ENCODE measurements at regions of chr3 and their contacts with region 1.

Region 1: GRCh38 chr3:197791113-197791891 is at the start of gene LRCH3:
- DNase-seq: peak; percentile 77 to 83 (median 82)
- H3K4me3 ChIP-seq: peak within 1 kb of the TSS; percentile 91 to 96
- H3K4me3 Mint-ChIP-seq: peak within 1 kb of the TSS; percentile 94 to 99 (median 98)
- H3K27ac ChIP-seq: peak within 1 kb of the TSS; percentile 94
- H3K27ac Mint-ChIP-seq: peak within 1 kb of the TSS; percentile 95 to 99 (median 98)
- H3K4me1 ChIP-seq: peaks cover 33% of the 10 kb centered on the region
- H3K4me1 Mint-ChIP-seq: peaks cover 27 to 49% (median 37%) of the 10 kb centered on the region in 4 donors
- H3K27me3 ChIP-seq: no peaks in the 10 kb centered on the region
- H3K27me3 Mint-ChIP-seq: no peaks in the 10 kb centered on the region
- total RNA-seq, gene LRCH3: 76.0 to 87.7 TPM

Region 2: GRCh38 chr3:197031315-197032285 is 759.7 kb before region 1 on chr3:
- CTCF ChIA-PET with region 1: no interaction called
- POLR2A ChIA-PET with region 1: no interaction called
- intact Hi-C with region 1: no loop called
- DNase-seq: no peak
- H3K4me3 ChIP-seq: no peak overlapping the region
- H3K4me3 Mint-ChIP-seq: peak overlapping the region in 3 of 8 donors; percentile 7 to 56 (median 28)
- H3K27ac ChIP-seq: no peak overlapping the region
- H3K27ac Mint-ChIP-seq: peak overlapping the region in 2 of 7 donors; percentile 13 to 18
- H3K4me1 ChIP-seq: peaks cover 3% of the 10 kb centered on the region
- H3K4me1 Mint-ChIP-seq: peaks cover 3 to 5% (median 4%) of the 10 kb centered on the region in 4 donors
- H3K27me3 ChIP-seq: no peaks in the 10 kb centered on the region
- H3K27me3 Mint-ChIP-seq: no peaks in the 10 kb centered on the region

Region 3: DNA sequence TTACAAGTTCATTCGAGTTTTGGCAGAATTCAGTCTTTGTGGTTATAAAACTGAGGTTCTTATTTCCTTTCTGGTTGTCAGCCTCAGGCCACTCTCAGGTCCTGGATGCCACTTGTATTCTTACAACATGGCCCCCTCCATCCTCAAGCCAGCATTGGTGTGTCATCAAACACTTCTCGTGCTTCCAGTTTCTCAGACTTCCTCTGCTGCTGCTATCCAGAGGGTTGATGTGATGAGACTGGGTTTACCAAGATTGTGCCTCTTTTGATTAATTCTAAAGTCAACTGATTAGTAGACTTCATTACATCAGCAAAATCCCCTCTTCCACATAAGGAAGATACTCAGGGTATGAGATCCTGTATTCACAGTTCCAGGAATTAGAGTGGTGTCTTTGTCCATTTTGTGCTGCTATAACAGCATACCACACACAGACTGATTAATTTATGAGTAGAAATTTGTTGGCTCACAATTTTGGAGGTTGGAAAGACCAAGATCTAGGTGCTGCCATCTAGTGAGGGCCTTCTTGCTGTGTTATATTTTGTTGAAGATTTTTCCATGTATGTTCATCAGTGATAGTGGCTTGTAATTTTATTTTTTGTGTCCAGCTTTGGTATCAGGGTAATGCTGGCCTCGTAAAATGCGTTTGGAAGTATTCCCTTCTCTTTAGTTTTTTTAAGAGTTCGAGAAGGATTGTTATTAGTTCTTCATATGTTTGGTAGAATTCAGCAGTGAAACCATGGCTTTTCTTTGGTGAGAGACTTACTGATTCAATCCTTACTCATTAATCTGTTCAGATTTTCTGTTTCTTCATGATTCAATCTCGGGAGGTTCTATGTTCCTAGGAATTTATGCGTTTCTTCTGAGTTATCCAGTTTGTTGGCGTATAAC is 10.8 kb after region 1 on chr3:
- CTCF ChIA-PET with region 1: interaction called, 6 read pairs
- POLR2A ChIA-PET with region 1: interaction called, 9 read pairs
- intact Hi-C with region 1: loop called (anchors 1 kb)
- DNase-seq: peak; percentile 20 to 48 (median 36)
- H3K4me3 ChIP-seq: no peak overlapping the region
- H3K4me3 Mint-ChIP-seq: peak overlapping the region in 5 of 8 donors; percentile 3 to 56 (median 24)
- H3K27ac ChIP-seq: no peak overlapping the region
- H3K27ac Mint-ChIP-seq: peak overlapping the region; percentile 74 to 84 (median 77)
- H3K4me1 ChIP-seq: peaks cover 44% of the 10 kb centered on the region
- H3K4me1 Mint-ChIP-seq: peaks cover 34 to 58% (median 43%) of the 10 kb centered on the region in 4 donors
- H3K27me3 ChIP-seq: no peaks in the 10 kb centered on the region
- H3K27me3 Mint-ChIP-seq: no peaks in the 10 kb centered on the region

Region 4: GRCh38 chr3:197835509-197835908 is 44.2 kb after region 1 on chr3:
- CTCF ChIA-PET with region 1: no interaction called
- POLR2A ChIA-PET with region 1: no interaction called
- intact Hi-C with region 1: no loop called
- DNase-seq: no peak
- H3K4me3 ChIP-seq: no peak overlapping the region
- H3K4me3 Mint-ChIP-seq: no peak overlapping the region
- H3K27ac ChIP-seq: no peak overlapping the region
- H3K27ac Mint-ChIP-seq: peak overlapping the region in 5 of 7 donors; percentile 51 to 89 (median 73)
- H3K4me1 ChIP-seq: no peaks in the 10 kb centered on the region
- H3K4me1 Mint-ChIP-seq: peaks cover 0 to 7% (median 6%) of the 10 kb centered on the region in 4 donors
- H3K27me3 ChIP-seq: no peaks in the 10 kb centered on the region
- H3K27me3 Mint-ChIP-seq: no peaks in the 10 kb centered on the region

Region 5: DNA sequence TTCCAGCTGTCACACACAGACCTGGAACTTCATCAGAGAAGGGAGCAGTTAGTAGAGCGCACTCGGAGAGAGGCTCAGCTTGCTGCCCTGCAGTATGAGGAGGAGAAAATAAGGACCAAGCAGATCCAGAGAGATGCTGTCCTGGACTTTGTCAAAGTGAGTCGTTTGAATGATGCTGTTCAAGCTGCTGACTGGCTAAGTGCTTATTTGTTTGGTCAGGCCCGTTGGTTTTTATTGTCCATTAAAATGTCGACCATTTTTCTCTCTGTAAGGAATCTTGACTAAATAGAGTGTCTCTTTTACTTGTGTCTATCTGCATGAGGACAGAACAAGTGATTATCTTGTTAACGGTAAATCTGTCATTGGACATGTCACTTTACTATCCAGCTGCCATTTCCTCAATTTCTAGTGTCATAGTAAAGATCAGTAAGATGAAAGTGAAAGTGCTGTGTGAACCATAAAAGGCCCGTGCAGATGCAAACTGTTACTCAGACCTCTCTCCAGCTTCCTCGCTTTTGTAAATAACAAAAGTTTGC is 56.6 kb after region 1 on chr3:
- CTCF ChIA-PET with region 1: no interaction called
- POLR2A ChIA-PET with region 1: interaction called, 7 read pairs
- intact Hi-C with region 1: loop called (anchors 5 kb)
- DNase-seq: peak; percentile 45 to 59 (median 49)
- H3K4me3 ChIP-seq: peak overlapping the region in 1 of 2 donors; percentile 34
- H3K4me3 Mint-ChIP-seq: peak overlapping the region; percentile 77 to 91 (median 84)
- H3K27ac ChIP-seq: peak overlapping the region; percentile 63
- H3K27ac Mint-ChIP-seq: peak overlapping the region; percentile 65 to 96 (median 94)
- H3K4me1 ChIP-seq: peaks cover 28% of the 10 kb centered on the region
- H3K4me1 Mint-ChIP-seq: peaks cover 16 to 32% (median 27%) of the 10 kb centered on the region in 4 donors
- H3K27me3 ChIP-seq: no peaks in the 10 kb centered on the region
- H3K27me3 Mint-ChIP-seq: no peaks in the 10 kb centered on the region